Activated naive CD8-positive, alpha-beta T cell treated with anti-CD3 and anti-CD28 coated beads, Interleukin-2, amount 10 ng/mL, durations not matched to agents 7 days and 5 days (primary cell): ENCODE measurements at regions of chr4 and their contacts with region 1.

Region 1: DNA sequence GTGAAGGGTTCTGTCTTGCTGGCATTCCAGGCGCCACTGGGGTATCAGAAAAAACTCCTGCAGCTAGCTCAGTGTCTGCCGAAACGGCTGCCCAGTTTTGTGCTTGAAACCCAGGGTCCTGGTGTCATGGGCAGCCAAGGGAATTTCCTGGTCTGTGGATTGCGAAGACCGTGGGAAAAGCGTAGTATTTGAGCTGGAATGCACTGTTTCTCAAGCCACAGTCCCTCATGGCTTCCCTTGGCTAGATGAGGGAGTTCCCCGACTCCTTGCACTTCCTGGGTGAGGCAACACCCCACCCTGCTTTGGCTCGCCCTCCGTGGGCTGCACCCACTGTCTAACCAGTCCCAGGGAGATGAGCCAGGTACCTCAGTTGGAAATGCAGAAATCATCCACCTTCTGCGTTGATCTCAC is 40.1 kb downstream of the NOP14 start:
- DNase-seq: no peak
- ATAC-seq: no peak
- H3K4me3 Mint-ChIP-seq: peak overlapping the region; percentile 35
- H3K27ac Mint-ChIP-seq: peak overlapping the region; percentile 76
- H3K4me1 Mint-ChIP-seq: peaks cover 30% of the 10 kb centered on the region
- H3K27me3 Mint-ChIP-seq: no peaks in the 10 kb centered on the region

Region 2: GRCh38 chr4:2893772-2894171 is 29.4 kb before region 1 on chr4:
- POLR2A ChIA-PET with region 1: no interaction called
- DNase-seq: no peak
- ATAC-seq: no peak
- H3K4me3 Mint-ChIP-seq: no peak overlapping the region
- H3K27ac Mint-ChIP-seq: no peak overlapping the region
- H3K4me1 Mint-ChIP-seq: no peaks in the 10 kb centered on the region
- H3K27me3 Mint-ChIP-seq: no peaks in the 10 kb centered on the region

Region 3: GRCh38 chr4:2934813-2935761 is 11.9 kb after region 1 on chr4:
- POLR2A ChIA-PET with region 1: interaction called, 12 read pairs
- DNase-seq: peak; percentile 99
- ATAC-seq: peak; percentile 62
- H3K4me3 Mint-ChIP-seq: peak overlapping the region; percentile 87
- H3K27ac Mint-ChIP-seq: peak overlapping the region; percentile 88
- H3K4me1 Mint-ChIP-seq: peaks cover 37% of the 10 kb centered on the region
- H3K27me3 Mint-ChIP-seq: no peaks in the 10 kb centered on the region